ENCODE measurements at regions of chr14 and their contacts with region 1.

Region 1: DNA sequence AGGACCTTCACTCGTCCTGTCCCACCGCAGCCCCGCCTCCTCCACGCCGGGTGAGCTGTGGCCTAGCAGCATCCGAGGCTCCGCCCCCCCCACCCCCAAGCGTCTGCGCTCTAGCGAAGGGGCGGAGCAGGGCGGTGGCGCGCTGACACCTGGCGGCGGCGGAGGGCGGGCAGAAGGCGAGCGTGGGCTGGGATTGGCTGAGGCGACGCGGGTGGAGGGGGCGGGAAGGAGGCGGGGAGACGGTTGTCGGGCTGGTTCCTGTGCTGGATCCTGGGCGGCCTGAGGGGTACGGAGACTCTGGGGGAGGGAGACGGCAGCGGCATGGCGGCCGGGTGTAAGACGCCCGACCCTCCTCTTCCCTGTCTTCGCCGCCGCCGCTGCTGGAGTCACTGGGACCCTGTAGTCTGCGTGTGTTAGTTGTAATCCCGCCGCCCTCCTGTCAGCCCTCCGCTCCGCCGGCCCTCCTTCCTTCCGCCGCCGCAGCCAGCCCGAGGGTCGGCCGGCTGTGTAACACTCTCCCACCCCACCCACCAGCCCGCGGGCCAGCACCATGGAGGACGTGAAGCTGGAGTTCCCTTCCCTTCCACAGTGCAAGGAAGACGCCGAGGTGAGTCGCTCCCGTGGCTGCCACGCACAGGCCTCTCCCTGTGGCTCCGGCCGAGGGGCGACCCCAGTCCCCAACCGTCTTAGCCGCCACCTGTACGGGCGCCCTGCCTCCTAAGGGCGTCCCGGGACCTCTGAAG is at the start of gene STYX:
- DNase-seq: peak; percentile 98
- H3K4me3 ChIP-seq: peak within 1 kb of the TSS; percentile 90
- H3K27ac ChIP-seq: peak within 1 kb of the TSS; percentile 47
- H3K4me1 ChIP-seq: peaks cover 15% of the 10 kb centered on the region
- CTCF ChIP-seq: no peak
- total RNA-seq, gene STYX: 4.7 and 7.6 TPM in 2 replicates

Region 2: DNA sequence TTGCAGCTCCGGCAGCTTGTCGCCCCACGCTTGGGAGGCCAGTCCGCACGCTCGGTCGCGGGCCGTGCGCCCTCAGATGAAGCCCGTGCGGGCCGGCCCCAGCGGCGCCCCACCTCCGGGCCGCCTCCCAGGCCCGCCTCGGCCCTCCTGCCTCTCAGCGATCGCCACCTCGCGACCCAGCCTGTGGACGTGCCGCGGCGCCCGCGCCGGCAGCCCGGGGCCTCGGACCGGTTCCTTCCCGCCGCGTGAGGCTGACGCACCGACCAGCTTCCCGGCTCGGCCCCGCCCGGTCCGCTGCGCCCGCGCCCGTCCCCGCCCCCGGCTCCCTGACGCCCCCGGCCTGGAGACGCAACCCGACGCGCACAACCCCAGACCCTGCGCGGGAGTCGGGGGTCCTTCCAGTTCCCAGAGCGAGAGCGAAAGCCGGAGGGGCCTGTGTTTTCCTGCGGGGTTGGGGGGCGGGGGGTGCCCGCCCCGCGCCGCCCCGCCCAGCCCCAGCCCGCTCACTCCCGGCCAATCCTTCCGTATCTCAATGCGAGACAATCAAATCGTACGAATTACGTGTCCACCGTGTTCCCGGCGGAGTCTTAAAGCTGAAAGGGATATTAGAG is 34.5 kb before region 1 on chr14 and contains the start of gene ERO1A:
- CTCF ChIA-PET with region 1: no interaction called
- POLR2A ChIA-PET with region 1: interaction called, 3 read pairs
- intact Hi-C with region 1: loop called (anchors 1 kb)
- DNase-seq: peak; percentile 76
- H3K4me3 ChIP-seq: peak within 1 kb of the TSS; percentile 93
- H3K27ac ChIP-seq: peak within 1 kb of the TSS; percentile 75
- H3K4me1 ChIP-seq: peaks cover 34% of the 10 kb centered on the region
- CTCF ChIP-seq: no peak
- total RNA-seq, gene ERO1A: 35.2 and 43.7 TPM in 2 replicates

Region 3: DNA sequence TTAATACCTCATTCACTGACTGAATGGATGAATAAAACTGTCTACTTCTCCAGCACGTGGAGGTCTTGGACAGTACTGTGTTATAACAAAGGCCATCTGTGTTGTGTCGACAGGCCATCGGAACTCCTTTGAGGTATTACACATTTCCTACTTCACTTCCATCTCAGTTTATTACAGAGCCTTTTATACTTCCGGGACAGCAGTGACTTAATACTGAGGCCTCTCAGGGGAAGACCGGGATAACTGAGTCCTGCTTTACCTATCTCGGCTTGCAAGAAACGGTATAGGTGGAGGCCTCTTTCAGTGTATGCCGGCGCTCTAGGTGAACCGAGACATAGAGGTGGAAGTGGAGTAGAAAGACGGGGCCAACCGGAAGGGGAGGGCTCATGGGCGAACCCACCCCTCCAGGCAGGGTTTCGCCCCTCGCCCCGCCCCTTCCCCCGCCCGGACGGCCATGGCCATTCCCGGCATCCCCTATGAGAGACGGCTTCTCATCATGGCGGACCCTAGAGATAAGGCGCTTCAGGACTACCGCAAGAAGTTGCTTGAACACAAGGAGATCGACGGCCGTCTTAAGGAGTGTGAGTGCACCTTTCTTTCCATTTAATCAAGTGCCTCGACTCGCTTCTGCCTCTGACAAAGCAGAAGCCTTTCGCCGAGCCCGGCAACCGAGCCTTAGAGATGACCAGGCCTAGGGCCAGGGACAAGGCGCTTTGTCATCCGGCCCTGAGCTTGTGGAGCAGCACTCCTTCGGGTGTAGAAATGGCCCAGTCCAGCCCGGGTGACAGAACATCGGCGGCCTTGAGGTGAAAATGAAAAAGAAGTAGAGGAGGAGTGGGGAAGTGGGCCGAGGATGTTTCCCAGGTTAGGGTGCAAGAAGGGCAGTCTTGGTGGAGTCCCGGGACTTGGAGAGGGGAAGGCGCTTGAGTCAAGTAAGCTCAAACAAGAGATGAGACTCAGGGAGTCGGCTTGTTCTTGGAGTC is 23.1 kb before region 1 on chr14 and contains the start of gene PSMC6:
- CTCF ChIA-PET with region 1: no interaction called
- POLR2A ChIA-PET with region 1: interaction called, 5 read pairs
- intact Hi-C with region 1: loop called (anchors 2 kb)
- DNase-seq: peak; percentile 92
- H3K4me3 ChIP-seq: peak within 1 kb of the TSS; percentile 93
- H3K27ac ChIP-seq: peak within 1 kb of the TSS; percentile 60
- H3K4me1 ChIP-seq: peaks cover 21% of the 10 kb centered on the region
- CTCF ChIP-seq: no peak
- total RNA-seq, gene PSMC6: 82.8 and 85.4 TPM in 2 replicates